Activated CD4-positive, alpha-beta memory T cell treated with anti-CD3 and anti-CD28 coated beads, Interleukin-2, amount 10 ng/mL, durations not matched to agents 7 days and 5 days (primary cell): ENCODE measurements at regions of chr7 and their contacts with region 1.

Region 1: GRCh38 chr7:31122649-31123058 is 70.5 kb downstream of the ADCYAP1R1 start:
- DNase-seq: peak; percentile 51
- H3K4me3 Mint-ChIP-seq: no peak overlapping the region
- H3K27ac Mint-ChIP-seq: no peak overlapping the region
- H3K4me1 Mint-ChIP-seq: no peaks in the 10 kb centered on the region
- H3K27me3 Mint-ChIP-seq: peaks cover 6% of the 10 kb centered on the region

Region 2: DNA sequence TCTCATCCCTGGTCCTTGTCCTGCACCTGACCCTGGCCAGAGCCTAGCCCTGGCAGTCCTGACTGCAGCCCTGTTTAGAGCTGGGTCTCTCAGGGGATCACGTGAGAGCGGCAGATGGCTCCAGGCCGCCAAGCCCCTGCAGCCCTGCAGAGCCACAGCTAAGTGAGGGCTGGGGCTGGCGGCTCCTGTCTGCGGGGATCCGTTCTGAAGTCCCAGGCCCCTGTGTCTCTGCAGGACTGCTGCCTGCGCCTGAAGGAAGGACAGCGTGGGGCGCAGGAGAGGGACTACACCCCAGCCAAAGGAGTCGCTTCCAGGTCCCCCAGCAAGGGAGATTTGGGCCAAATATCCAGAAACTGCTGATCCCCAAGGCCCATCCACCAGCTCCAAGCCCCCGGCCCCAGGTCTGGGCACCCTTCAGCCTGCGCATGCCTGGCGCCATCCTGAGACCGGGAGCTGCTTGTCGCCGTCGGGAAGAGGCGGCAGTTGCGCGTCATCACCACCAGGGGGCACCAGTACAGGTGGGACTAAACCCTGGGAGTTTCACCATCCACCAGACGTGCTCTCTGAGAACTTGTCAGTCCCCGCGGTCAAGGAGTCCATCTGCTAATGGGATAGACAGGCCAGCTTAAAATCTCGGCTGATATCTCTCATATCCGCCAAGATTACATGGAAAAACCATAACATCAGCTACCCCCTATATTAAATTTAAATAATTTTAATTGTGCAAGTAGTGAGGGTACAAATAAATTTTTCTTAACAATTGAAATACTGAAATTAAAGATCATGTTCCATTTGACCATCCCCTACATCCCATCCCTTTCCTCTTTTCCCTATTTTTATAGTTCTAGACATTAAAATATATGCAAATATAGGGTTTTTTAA is 184.0 kb before region 1 on chr7:
- CTCF ChIA-PET with region 1: interaction called, 13 read pairs
- POLR2A ChIA-PET with region 1: no interaction called
- DNase-seq: peak; percentile 65
- H3K4me3 Mint-ChIP-seq: no peak overlapping the region
- H3K27ac Mint-ChIP-seq: no peak overlapping the region
- H3K4me1 Mint-ChIP-seq: no peaks in the 10 kb centered on the region
- H3K27me3 Mint-ChIP-seq: peaks cover 35% of the 10 kb centered on the region

Region 3: DNA sequence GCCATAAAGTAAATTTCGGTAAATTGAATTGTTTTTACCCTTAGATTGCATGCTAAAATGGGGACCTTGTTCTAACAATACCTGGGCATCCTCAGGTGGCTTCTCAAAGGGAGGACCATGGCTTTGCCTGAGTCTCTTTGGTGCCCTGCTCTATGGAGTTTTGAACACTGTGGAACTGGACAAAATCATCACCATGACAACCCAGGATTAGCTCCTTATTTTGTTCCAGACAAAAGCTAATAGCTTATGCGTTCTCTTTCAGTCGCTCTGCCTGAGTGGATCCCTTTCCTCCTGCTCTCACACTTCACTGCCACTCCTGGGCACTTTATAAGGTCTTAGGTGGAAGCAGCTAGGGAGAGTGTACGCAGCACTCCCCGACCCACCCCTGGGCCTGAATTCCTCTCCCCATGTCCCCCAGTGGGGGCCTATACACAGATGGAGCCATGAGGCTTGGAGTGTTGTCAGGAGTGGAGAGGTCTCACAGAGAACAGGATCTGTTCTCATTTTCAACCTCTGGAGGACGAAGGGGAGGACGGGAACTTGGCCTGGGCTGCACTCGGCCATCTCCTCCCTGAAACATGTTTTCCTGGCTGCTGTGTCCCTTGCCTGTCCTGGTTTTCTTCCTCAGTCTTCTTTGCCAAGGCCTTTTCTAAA is 51.5 kb before region 1 on chr7:
- CTCF ChIA-PET with region 1: no interaction called
- POLR2A ChIA-PET with region 1: no interaction called
- DNase-seq: no peak
- H3K4me3 Mint-ChIP-seq: no peak overlapping the region
- H3K27ac Mint-ChIP-seq: no peak overlapping the region
- H3K4me1 Mint-ChIP-seq: no peaks in the 10 kb centered on the region
- H3K27me3 Mint-ChIP-seq: peaks cover 2% of the 10 kb centered on the region

Region 4: DNA sequence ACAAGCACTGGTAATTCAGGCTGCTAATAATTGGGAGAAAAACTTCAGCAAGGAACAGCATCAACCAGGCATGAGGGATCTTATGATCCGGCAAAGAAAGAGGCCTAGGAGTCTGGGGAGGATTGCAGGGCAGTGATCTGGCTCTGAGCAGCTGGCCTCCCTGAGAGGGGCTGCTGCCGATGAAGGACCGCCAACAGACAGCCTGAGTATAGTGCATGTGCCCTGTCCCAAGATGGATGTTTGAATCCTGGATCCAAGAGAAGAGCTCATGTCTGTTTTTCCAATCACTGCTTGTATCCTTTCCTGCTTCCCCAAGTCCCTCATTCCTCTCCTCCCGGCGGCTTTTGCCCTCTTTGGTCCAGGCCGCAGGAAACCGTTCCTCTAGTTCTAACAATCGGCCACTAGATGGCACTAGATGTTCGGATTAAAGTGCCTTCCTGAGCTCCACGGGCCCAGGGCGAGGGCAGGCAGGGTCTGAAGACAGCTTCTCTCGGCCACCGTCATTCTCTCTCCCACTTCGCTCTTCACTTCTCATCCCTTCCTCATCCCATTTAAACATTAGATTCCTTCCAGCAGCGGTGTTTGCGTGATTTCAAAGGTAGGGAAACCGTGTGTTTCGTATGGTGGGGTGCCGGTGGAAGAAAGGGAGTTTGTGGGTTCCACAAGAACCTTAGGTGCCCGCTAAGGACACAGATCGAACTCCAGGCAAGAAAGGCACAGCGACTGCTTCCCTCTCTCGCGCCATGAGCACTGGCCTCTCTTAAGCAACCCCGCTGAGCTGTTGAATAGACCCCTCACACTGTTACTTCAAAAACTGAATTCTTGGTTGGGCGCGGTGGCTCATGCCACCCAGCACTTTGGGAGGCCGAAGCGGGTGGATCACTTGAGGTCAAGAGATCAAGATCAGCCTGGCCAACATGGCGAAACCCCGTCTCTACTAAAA is 11.9 kb after region 1 on chr7:
- CTCF ChIA-PET with region 1: interaction called, 61 read pairs
- POLR2A ChIA-PET with region 1: no interaction called
- DNase-seq: peak; percentile 45
- H3K4me3 Mint-ChIP-seq: no peak overlapping the region
- H3K27ac Mint-ChIP-seq: no peak overlapping the region
- H3K4me1 Mint-ChIP-seq: no peaks in the 10 kb centered on the region
- H3K27me3 Mint-ChIP-seq: no peaks in the 10 kb centered on the region